Activated naive CD4-positive, alpha-beta T cell treated with anti-CD3 and anti-CD28 coated beads for 36 hours (primary cell): ENCODE measurements at regions of chr11 and their contacts with region 1.

Region 1: GRCh38 chr11:102451681-102452460 is 694 bp downstream of the TMEM123 start:
- DNase-seq: peak; percentile 81
- H3K4me3 Mint-ChIP-seq: peak overlapping the region; percentile 89
- H3K27ac Mint-ChIP-seq: peak overlapping the region; percentile 96
- H3K4me1 Mint-ChIP-seq: peaks cover 70% of the 10 kb centered on the region
- H3K27me3 Mint-ChIP-seq: no peaks in the 10 kb centered on the region

Region 2: DNA sequence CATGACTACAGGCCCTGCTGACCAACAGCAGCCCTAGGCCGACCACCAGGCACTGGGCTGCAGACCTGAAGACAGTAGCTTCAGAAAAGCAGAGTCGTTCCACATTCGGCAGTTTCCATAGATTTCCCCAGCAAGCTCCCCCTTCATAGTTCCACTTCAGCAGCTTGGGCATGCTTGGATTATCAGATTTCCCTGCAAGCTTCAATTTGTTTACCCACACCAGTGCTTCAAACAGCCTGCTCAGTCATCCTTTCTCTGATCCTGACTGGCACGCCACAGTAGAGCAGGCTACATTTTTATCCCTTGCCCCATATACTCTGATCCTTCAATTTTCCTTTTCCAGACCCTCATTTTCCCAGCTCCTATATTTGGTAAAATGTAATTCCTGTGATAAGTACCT is 455.8 kb before region 1 on chr11:
- CTCF ChIA-PET with region 1: no interaction called
- intact Hi-C with region 1: no loop called
- DNase-seq: no peak
- H3K4me3 Mint-ChIP-seq: no peak overlapping the region
- H3K27ac Mint-ChIP-seq: no peak overlapping the region
- H3K4me1 Mint-ChIP-seq: no peaks in the 10 kb centered on the region
- H3K27me3 Mint-ChIP-seq: no peaks in the 10 kb centered on the region

Region 3: DNA sequence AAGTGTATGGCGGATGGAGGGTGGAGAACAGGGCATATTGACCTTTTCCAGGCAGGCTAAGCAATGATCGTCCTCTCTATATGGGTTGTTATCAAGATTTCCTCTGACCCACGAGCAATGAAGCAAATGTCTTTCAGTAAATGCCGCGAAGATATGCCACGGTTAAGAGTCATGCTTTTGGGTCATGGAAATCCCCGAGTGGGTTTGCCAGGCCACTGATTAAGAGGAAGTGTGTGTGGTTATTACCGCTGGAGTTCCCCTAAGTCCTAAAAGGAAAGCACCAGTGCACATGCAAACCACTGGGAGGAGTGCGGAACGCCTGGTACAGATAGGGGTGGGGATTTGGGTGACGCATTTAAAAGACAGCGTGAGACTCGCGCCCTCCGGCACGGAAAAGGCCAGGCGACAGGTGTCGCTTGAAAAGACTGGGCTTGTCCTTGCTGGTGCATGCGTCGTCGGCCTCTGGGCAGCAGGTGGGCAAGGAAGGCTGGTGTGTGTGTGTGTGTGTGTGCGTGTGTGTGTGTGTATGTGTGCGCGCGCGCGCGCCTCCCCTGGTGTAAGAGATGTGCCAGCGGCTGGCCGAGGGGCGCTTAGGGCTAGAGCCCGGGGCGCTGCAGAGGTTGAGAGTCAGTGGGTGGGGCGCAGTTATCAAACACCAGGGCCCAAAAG is 134.6 kb before region 1 on chr11 and contains the start of gene BIRC3:
- CTCF ChIA-PET with region 1: no interaction called
- intact Hi-C with region 1: loop called (anchors 1 kb)
- DNase-seq: peak; percentile 97
- H3K4me3 Mint-ChIP-seq: peak within 1 kb of the TSS; percentile 96
- H3K27ac Mint-ChIP-seq: peak within 1 kb of the TSS; percentile 98
- H3K4me1 Mint-ChIP-seq: peaks cover 66% of the 10 kb centered on the region
- H3K27me3 Mint-ChIP-seq: no peaks in the 10 kb centered on the region
- total RNA-seq, gene BIRC3: 100 to 105 TPM

Region 4: GRCh38 chr11:102396708-102397563 is 54.9 kb before region 1 on chr11:
- CTCF ChIA-PET with region 1: interaction called, 58 read pairs
- intact Hi-C with region 1: loop called (anchors 1 kb)
- DNase-seq: no peak
- H3K4me3 Mint-ChIP-seq: no peak overlapping the region
- H3K27ac Mint-ChIP-seq: peak overlapping the region; percentile 63
- H3K4me1 Mint-ChIP-seq: peaks cover 48% of the 10 kb centered on the region
- H3K27me3 Mint-ChIP-seq: no peaks in the 10 kb centered on the region

Region 5: DNA sequence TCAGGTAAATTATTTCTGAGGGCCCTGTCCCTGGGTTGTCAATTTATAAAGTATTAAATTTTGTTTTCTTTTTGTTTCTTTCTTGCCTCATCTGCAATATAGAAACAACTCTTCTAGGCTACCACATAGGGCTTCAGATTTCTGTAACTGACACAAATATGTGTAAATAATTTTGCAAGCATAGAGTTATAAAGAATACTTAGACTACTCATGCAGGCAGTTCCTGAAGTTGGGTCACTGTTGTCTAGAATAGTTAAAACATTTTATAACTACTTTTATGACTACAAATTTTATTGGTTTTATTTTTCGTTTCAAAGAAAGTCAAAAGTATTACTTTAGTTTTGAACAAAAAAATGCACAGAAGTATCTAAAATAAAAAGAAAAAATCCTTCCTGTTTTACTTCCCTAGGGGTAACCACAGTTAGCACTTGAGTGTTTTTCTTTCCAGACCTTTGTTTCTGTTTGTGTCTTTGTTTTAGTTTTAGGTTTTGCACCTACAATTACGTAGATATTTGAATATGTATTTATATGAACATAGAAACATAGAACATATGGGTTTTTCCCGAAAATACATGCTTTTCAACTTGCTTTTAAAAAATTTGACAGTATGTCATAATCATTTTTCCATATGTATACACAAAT is 13.1 kb after region 1 on chr11:
- CTCF ChIA-PET with region 1: interaction called, 5 read pairs
- intact Hi-C with region 1: loop called (anchors 1 kb)
- DNase-seq: no peak
- H3K4me3 Mint-ChIP-seq: no peak overlapping the region
- H3K27ac Mint-ChIP-seq: peak overlapping the region; percentile 11
- H3K4me1 Mint-ChIP-seq: peaks cover 75% of the 10 kb centered on the region
- H3K27me3 Mint-ChIP-seq: no peaks in the 10 kb centered on the region

Region 6: DNA sequence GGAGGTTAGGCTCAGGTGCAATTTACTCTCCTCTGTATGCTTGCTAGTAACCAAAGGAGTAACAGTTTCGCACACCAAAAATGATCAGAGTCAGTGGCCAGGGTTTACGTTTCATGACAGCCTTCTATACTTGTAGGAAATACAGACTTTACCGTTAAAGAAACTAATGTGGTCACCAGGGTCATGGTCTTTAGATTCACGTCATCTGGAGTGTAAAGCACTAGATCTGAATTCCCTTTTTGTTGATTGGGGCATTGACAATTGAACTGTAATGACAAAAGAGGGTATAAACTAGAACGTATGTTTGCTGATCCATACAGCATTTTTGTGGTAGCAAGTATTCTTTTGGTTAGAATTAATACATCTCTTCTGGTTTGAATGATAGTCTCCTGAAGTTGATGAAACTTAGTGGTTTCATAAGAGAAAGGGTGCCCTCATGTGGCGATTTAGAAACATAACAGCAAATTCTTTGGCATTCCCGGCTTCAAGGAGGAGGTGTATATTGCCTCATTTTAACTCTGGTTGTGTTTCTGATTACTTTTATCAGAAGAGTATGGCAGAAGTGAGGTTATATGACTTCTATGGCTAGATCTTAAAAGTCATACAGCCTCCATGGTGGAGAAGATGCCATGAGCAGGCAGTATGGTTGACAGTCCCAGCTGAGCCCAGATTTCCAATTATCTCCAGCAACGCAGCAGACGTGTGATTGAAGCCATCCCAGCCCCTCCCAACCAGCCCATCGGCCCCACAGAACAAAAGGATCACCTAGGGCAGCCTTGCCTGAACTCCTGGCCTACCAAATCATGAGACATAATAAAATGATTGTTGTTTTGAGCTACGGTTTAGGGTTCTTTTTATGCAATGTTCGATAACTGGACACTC is 43.5 kb after region 1 on chr11:
- CTCF ChIA-PET with region 1: interaction called, 4 read pairs
- intact Hi-C with region 1: loop called (anchors 1 kb)
- DNase-seq: peak; percentile 53
- H3K4me3 Mint-ChIP-seq: no peak overlapping the region
- H3K27ac Mint-ChIP-seq: no peak overlapping the region
- H3K4me1 Mint-ChIP-seq: peaks cover 25% of the 10 kb centered on the region
- H3K27me3 Mint-ChIP-seq: no peaks in the 10 kb centered on the region

Region 7: DNA sequence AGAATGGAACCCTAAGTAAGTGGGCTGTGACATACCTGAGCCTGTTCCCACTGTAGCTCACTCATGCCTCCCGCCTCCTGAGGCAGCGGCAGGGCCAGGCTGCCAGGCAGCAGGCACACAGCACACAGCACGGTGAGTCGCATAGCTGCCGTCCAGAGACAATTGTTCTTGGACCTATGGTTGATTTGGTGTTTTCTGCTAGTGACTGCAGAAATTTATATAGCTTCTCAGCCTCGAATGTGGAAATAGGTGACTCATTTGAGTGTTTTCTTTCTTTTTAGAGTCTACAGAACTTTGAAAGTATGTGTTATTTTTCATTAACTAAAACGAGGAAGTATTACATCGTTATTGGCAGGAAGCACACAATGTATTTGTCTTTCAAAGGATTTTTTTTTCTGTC is 78.7 kb after region 1 on chr11 and contains the start of gene MMP7:
- CTCF ChIA-PET with region 1: no interaction called
- intact Hi-C with region 1: no loop called
- DNase-seq: no peak
- H3K4me3 Mint-ChIP-seq: peak within 1 kb of the TSS; percentile 3
- H3K27ac Mint-ChIP-seq: no peak within 1 kb of the TSS
- H3K4me1 Mint-ChIP-seq: peaks cover 7% of the 10 kb centered on the region
- H3K27me3 Mint-ChIP-seq: no peaks in the 10 kb centered on the region
- total RNA-seq, gene MMP7: not detected

Region 8: GRCh38 chr11:103222806-103223205 is 770.9 kb after region 1 on chr11:
- CTCF ChIA-PET with region 1: no interaction called
- intact Hi-C with region 1: no loop called
- DNase-seq: no peak
- H3K4me3 Mint-ChIP-seq: no peak overlapping the region
- H3K27ac Mint-ChIP-seq: no peak overlapping the region
- H3K4me1 Mint-ChIP-seq: no peaks in the 10 kb centered on the region
- H3K27me3 Mint-ChIP-seq: no peaks in the 10 kb centered on the region